Dorsolateral prefrontal cortex (tissue), 120 donors: ENCODE measurements at regions of chr1 and their contacts with region 1.

Region 1: GRCh38 chr1:19096036-19096833 is 113.8 kb downstream of the UBR4 start:
- DNase-seq: peak in 7 of 10 donors; percentile 35 to 68 (median 66)
- H3K4me3 ChIP-seq: no peak overlapping the region
- H3K27ac ChIP-seq: peak overlapping the region in 1 of 59 donors; percentile 1
- H3K27me3 ChIP-seq: no peaks in the 10 kb centered on the region
- CTCF ChIP-seq: peak in 54 of 56 donors; percentile 31 to 78 (median 63)

Region 2: GRCh38 chr1:18479484-18479883 is 616.8 kb before region 1 on chr1:
- intact Hi-C with region 1: no loop called
- DNase-seq: peak in 1 of 10 donors; percentile 15
- H3K4me3 ChIP-seq: no peak overlapping the region
- H3K27ac ChIP-seq: no peak overlapping the region
- H3K27me3 ChIP-seq: peaks cover 0 to 9% (median 0%) of the 10 kb centered on the region in 45 donors
- CTCF ChIP-seq: no peak

Region 3: DNA sequence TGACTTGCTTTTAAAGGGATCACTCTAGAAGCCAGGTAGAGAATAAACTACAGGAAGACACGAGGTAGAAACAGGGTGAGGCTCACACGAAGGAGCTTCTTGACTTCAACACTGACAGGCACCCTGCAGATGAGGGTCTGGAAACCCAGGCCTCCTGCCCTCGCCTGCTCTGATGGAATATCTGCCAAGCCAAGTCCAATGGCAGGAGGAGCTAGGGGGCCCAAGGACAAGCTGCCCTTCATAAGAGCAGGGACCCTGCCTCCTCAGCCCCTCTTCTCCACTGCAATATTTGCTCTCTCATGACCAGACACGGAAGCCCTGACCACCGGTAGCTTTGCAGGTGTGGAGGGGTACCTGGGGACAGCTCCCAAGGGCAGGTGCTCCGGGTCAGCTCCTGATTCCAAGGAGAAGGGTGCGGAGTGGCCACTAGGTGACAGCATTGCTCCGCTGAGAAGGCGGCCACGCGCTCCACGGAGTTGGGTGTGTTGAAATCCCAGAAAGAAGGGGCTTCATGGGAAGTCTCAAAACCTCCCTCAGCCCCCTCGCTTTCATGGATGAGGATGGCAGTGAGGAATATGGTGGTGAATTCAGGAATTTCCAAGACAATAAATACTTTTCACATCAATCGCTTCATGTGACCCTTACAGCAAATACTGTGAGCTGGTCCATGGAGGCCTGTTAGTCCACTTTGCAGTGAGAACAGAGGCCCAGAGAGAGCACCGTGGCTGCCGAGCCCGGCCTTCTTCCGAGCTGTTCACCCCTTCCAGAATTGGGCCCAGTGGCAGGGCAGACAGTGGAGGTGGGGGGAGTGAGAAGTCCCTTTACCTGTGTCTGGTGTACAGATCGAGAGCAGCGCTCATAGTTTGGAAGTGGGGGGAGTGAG is 498.8 kb before region 1 on chr1:
- intact Hi-C with region 1: loop called in 1 of 2 experiments (anchors 10 kb)
- DNase-seq: peak; percentile 54 to 81 (median 64)
- H3K4me3 ChIP-seq: no peak overlapping the region
- H3K27ac ChIP-seq: no peak overlapping the region
- H3K27me3 ChIP-seq: peaks cover 0 to 30% (median 9%) of the 10 kb centered on the region in 45 donors
- CTCF ChIP-seq: peak; percentile 70 to 98 (median 91)

Region 4: GRCh38 chr1:18883636-18884418 is 212.4 kb before region 1 on chr1:
- intact Hi-C with region 1: loop called in 1 of 2 experiments (anchors 5 kb)
- DNase-seq: peak; percentile 74 to 89 (median 84)
- H3K4me3 ChIP-seq: no peak overlapping the region
- H3K27ac ChIP-seq: peak overlapping the region in 14 of 59 donors; percentile 1 to 54 (median 22)
- H3K27me3 ChIP-seq: no peaks in the 10 kb centered on the region
- CTCF ChIP-seq: peak; percentile 78 to 96 (median 91)

Region 5: GRCh38 chr1:18902523-18903290 is 193.5 kb before region 1 on chr1 and contains the start of gene ALDH4A1:
- intact Hi-C with region 1: loop called in 1 of 2 experiments (anchors 2 kb)
- DNase-seq: peak; percentile 94 to 100 (median 98)
- H3K4me3 ChIP-seq: peak within 1 kb of the TSS; percentile 64 to 99 (median 88)
- H3K27ac ChIP-seq: peak within 1 kb of the TSS; percentile 46 to 98 (median 91)
- H3K27me3 ChIP-seq: no peaks in the 10 kb centered on the region
- CTCF ChIP-seq: peak in 37 of 56 donors; percentile 7 to 61 (median 32)
- total RNA-seq, gene ALDH4A1: 16.8 to 112 (median 40.4) TPM

Region 6: DNA sequence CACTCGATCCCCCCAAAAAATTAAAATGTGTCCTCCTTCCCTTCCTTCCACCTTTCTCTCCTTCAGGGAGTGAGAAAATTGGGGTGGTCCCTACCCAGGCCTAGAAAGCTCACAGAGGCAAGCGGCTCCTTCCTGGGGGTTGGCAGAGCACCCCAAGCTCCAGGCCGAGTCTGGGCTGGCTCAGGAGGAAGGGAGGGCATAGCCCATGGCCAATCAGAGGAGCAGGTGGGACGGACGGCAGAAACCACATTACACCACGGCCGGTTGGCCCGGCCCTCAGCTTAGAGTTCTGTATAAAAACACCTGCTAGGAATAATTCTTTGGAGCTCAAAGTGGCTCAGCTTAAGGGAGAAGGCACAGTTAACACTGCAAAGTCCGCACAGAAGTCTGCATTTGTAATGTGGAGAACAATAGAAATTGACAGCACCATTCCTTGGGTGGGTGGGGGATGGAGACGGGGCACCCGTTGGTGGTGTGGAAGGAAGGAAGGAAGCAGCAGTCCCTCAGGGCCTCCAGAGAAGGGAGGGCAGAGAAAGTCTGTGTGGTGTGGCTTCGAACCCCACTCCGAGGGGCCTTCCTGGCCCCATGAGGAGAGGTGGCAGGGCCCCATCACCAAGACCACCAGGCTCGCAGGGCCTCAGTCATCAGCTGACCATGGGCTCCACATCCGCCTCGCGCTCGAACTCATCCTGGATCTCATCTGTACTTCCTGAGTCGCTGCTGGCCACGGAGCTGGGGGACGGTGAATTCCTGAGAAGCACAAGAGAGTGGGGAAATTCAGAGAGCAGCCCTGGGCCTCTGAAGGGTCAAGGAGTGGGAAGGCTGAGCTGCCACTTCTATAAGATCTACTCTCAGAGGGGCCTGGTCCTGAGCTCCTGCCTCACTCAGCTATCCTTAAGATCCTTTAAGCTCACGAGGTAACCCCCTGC is 188.1 kb before region 1 on chr1:
- intact Hi-C with region 1: loop called (anchors 2 kb)
- DNase-seq: no peak
- H3K4me3 ChIP-seq: peak overlapping the region in 12 of 59 donors; percentile 1 to 36 (median 13)
- H3K27ac ChIP-seq: peak overlapping the region in 55 of 59 donors; percentile 4 to 92 (median 77)
- H3K27me3 ChIP-seq: no peaks in the 10 kb centered on the region
- CTCF ChIP-seq: no peak

Region 7: DNA sequence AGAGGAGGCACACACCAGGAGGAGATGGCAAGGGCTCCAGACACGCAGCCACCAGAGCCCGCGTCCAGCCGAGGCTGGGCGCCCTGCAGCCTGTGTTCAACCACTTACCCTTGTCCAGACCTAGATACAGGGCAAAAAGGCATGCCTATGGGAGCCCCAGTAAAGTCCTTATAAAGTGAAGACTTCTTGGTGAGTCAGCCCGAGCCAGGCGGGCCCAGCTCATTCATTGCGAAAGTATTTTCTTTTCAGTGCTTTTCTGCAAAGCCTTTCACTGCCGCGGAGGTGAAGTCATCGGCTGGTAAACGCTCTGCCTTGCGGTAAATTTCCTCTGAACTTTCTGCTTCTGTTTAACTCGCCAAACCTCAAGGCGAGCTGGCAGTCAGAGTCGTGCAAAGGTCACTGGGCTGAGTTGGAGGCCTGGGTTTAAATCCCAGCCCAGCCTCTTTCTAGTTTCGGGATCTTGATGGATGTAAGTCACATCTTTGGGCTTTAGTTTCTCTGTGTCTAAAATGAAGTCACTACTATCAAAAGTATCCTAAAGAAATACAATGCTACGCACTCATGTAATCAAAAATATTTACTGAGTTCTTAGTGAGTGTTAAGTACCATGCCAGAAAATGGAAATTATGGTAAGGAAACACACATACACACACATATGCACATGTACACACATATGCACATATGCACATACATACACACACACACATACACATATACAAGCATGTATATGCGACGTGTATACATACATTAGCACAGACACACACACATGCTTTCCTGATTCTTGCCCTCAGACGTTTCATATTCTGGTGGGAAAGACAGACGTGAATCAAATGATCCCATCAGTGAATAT is 85.0 kb before region 1 on chr1:
- intact Hi-C with region 1: no loop called
- DNase-seq: peak in 3 of 10 donors; percentile 36 to 67 (median 44)
- H3K4me3 ChIP-seq: no peak overlapping the region
- H3K27ac ChIP-seq: peak overlapping the region in 5 of 59 donors; percentile 2 to 48 (median 28)
- H3K27me3 ChIP-seq: peaks cover 0 to 4% (median 0%) of the 10 kb centered on the region in 45 donors
- CTCF ChIP-seq: no peak